ENCODE measurements at regions of chr19 and their contacts with region 1.

Region 1: DNA sequence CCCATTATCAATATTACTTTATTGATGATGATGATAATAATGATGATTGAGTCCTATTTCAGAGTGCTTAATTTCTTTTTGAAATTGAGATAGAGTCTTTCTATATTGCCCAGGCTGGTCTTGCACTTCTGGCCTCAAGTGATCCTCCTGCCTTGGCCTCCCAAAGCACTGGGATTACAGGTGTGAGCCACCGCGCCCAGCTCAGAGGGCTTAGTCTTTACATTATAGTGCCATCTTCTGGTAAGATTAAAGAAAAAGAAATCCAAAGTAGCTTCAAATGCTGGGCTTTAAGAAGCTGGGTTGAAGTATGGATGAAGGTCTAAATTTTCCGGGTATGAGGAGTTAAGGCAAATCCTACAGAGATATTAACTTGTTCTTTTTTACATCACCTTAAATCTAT is 3.4 kb upstream of the ZNF333 start:
- DNase-seq: no peak
- H3K27ac ChIP-seq: no peak overlapping the region
- CTCF ChIP-seq: no peak; the same call in 1 of the 2 replicates

Region 2: DNA sequence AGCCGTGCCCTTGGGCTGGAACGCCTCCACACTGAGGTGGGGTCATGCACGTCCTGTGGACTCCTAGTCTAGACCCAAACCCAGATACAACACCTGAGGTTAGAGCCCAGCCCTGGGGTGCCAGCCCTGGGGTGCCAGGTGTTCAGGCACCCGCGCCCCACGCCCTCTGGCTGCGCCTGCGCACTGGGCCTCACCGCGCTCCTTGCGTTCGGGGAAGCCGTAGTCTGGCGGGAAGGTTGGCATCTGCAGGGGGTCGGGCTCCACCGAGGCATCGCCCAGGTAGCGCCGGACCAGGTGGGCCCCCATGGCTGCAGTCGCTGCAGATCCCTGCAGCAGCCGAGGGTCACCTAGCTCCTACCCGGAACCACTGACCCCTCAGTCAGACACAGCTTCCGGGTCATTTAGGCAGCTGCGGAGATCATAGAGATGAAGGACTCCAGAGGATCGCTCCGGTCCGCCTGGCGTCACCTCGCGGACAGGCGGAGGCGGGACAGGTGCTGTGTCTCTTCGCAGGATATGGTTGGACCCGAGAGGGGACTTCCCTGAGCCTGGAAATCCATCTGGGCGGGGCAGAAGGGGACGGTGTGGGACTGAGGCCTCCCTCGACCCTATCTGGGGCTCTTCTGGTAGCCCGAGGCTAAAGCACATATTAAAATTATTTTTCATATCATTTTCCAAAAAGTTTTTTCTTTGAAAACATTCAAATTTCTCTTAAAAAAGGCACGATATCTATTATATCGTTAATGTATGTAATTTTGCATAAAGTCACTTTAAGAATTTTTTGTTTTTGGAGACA is 114.5 kb before region 1 on chr19 and contains the start of gene NDUFB7:
- CTCF ChIA-PET with region 1: interaction called, 16 read pairs
- POLR2A ChIA-PET with region 1: no interaction called
- DNase-seq: peak; percentile 92
- H3K27ac ChIP-seq: peak within 1 kb of the TSS; percentile 100
- CTCF ChIP-seq: peak; percentile 99

Measured in RWPE1 (cell line).